Transverse colon (tissue), 4 donors: ENCODE measurements at regions of chr4 and their contacts with region 1.

Region 1: GRCh38 chr4:13627606-13628301 is at the start of gene BOD1L1:
- DNase-seq: peak; percentile 91
- H3K4me3 ChIP-seq: peak within 1 kb of the TSS; percentile 83 to 96 (median 88)
- H3K27ac ChIP-seq: peak within 1 kb of the TSS; percentile 90 to 98 (median 94)
- H3K4me1 ChIP-seq: peaks cover 16 to 29% (median 21%) of the 10 kb centered on the region in 4 donors
- H3K27me3 ChIP-seq: no peaks in the 10 kb centered on the region
- CTCF ChIP-seq: peak in 4 of 5 experiments; percentile 23 to 55 (median 36)
- EP300 ChIP-seq: no peak
- POLR2A ChIP-seq: peak; percentile 90
- total RNA-seq, gene BOD1L1: 33.7 to 72.2 (median 60.8) TPM

Region 2: DNA sequence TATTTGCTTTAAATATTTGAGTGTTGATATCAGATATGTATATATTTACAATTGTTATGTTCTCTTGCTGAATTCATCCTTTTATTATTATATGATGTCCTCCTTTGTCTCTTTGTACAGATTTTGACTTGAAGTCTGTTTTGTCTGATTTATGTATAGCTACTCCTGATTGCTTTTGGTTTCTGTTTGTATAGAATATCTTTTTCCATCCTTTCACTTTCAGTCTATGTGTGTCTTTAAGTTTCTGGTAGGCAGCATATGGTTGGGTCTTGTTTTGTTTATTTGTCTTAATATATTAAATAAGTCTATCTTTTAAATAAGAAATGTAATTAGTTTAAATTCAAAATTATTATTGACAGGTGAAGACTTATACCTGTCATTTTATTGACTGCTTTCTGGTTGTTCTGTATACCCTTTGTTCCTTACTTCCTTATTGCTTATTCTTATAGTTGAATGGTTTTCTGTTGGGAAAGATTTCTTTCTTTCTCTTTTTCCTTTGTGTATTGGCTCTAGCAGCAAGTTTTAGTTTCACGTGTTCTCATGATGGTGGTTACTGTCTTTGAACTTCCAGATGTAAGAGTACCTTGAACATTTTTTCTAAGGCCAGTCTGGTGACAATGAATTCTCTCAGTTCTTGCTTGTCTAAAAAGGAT is 174.7 kb before region 1 on chr4:
- in situ Hi-C with region 1: no loop called
- intact Hi-C with region 1: no loop called
- DNase-seq: no peak
- H3K4me3 ChIP-seq: no peak overlapping the region
- H3K27ac ChIP-seq: no peak overlapping the region
- H3K4me1 ChIP-seq: no peaks in the 10 kb centered on the region
- H3K27me3 ChIP-seq: no peaks in the 10 kb centered on the region
- CTCF ChIP-seq: no peak
- EP300 ChIP-seq: no peak
- POLR2A ChIP-seq: no peak

Region 3: DNA sequence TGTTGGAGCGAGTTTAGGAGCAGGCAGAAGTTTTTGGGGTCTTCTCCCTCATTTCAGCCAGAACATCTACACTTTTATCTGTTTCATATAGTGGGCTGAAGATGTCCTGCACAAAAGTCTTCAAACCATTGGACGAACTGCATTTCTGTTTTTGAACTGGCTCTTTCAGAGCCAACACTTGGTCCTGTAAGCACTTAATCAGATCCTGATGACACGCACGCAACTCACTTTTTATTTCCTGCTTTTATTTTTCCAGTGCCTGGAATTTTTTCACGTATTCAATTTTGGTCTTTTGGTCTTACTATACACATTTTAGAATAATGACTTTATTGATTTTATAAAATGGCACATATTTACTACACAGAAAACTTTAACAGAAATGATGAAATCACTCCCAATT is 43.3 kb before region 1 on chr4:
- in situ Hi-C with region 1: no loop called
- intact Hi-C with region 1: no loop called
- DNase-seq: no peak
- H3K4me3 ChIP-seq: no peak overlapping the region
- H3K27ac ChIP-seq: no peak overlapping the region
- H3K4me1 ChIP-seq: no peaks in the 10 kb centered on the region
- H3K27me3 ChIP-seq: no peaks in the 10 kb centered on the region
- CTCF ChIP-seq: no peak
- EP300 ChIP-seq: no peak
- POLR2A ChIP-seq: no peak

Region 4: GRCh38 chr4:14994241-14994640 is 1366.5 kb after region 1 on chr4:
- in situ Hi-C with region 1: loop called in 1 of 4 experiments (anchors 25 kb)
- intact Hi-C with region 1: no loop called
- DNase-seq: no peak
- H3K4me3 ChIP-seq: no peak overlapping the region
- H3K27ac ChIP-seq: no peak overlapping the region
- H3K4me1 ChIP-seq: no peaks in the 10 kb centered on the region
- H3K27me3 ChIP-seq: no peaks in the 10 kb centered on the region
- CTCF ChIP-seq: no peak
- EP300 ChIP-seq: no peak
- POLR2A ChIP-seq: no peak

Region 5: GRCh38 chr4:15001869-15002658 is 1374.3 kb after region 1 on chr4 and contains the start of gene CPEB2:
- in situ Hi-C with region 1: loop called in 2 of 4 experiments (anchors 25 kb)
- intact Hi-C with region 1: no loop called
- DNase-seq: peak; percentile 96
- H3K4me3 ChIP-seq: peak within 1 kb of the TSS; percentile 85 to 97 (median 89)
- H3K27ac ChIP-seq: peak within 1 kb of the TSS; percentile 99 to 100 (median 100)
- H3K4me1 ChIP-seq: peaks cover 0 to 23% (median 17%) of the 10 kb centered on the region in 4 donors
- H3K27me3 ChIP-seq: no peaks in the 10 kb centered on the region
- CTCF ChIP-seq: no peak
- EP300 ChIP-seq: peak; percentile 74
- POLR2A ChIP-seq: peak; percentile 98
- total RNA-seq, gene CPEB2: 23.2 to 38.5 (median 26.5) TPM